ENCODE measurements at regions of chr3 and their contacts with region 1.

Region 1: DNA sequence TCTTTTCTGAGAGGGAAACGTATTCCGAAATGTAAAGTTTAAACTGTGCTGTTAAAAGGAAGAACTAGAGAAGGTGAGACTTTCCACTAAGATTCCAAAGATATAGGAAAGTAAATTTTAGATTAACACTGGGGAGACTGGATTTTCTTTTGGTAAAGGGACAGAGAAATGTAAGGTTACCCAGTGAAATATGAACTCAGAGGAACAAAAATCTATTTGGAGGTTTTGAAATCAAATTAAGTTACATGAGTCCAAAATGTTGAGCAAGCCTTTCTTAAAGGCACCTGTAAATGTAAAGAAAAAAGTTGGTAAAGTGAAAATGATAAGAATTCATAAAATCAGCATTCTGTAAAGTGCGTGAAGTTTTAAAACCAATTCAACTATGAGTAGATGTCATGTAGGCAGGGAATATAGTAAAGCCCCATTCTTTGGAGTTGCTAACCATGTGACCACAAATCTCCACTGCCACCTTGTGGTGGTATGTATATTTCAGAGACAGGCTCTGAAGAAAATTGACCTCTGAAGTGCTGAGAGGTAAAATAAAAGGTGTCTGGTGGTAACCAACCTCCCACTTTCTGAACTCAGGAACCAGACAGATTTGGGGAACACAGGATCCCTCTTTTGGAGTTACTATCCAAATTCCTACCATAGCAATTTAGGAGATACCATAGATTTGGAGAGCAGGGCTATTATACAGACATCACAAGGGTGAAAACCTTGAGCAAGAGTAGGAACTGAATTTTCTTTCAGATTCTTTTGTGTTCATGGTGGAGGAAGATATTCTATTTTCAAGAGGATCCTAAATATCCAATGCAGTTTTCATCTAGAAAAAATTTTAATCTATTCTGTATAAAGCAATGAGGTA is 215.3 kb downstream of the ROBO2 start:
- DNase-seq: no peak
- H3K4me3 ChIP-seq: no peak overlapping the region
- H3K27ac ChIP-seq: no peak overlapping the region
- H3K4me1 ChIP-seq: no peaks in the 10 kb centered on the region
- H3K27me3 ChIP-seq: no peaks in the 10 kb centered on the region
- CTCF ChIP-seq: peak; percentile 24 to 72 (median 59)

Region 2: GRCh38 chr3:76776927-76777326 is 478.3 kb before region 1 on chr3:
- intact Hi-C with region 1: no loop called
- DNase-seq: no peak
- H3K4me3 ChIP-seq: no peak overlapping the region
- H3K27ac ChIP-seq: no peak overlapping the region
- H3K4me1 ChIP-seq: no peaks in the 10 kb centered on the region
- H3K27me3 ChIP-seq: no peaks in the 10 kb centered on the region
- CTCF ChIP-seq: no peak

Region 3: DNA sequence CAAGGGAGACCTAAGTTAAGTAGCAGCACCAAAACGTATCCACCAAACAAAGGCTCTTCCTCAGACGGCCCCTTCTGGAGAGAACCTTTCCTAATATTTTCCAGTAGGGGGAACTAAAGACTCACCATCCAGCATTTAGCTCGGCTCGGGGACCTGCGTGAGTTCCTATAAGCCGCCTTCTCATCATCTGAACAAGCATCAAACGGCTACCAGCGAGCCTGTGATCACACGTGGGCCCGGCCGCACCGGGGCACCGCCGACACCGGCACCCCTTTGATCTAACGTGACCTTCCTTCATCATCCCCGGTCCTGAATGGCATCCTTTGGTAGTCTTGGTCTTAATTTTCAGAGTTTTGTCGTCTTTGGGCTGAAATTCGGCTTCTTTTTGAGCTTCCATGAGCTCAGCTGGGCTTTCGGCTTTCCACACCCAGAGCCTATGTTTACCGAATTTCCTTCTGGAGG is 216.7 kb before region 1 on chr3:
- intact Hi-C with region 1: loop called (anchors 1 kb)
- DNase-seq: peak in 1 of 2 donors; percentile 82
- H3K4me3 ChIP-seq: peak overlapping the region; percentile 63 to 82
- H3K27ac ChIP-seq: peak overlapping the region; percentile 63 to 73
- H3K4me1 ChIP-seq: no peaks in the 10 kb centered on the region
- H3K27me3 ChIP-seq: no peaks in the 10 kb centered on the region
- CTCF ChIP-seq: peak; percentile 38 to 71 (median 57)

Region 4: GRCh38 chr3:77370413-77370812 is 115.2 kb after region 1 on chr3:
- intact Hi-C with region 1: no loop called
- DNase-seq: peak in 1 of 2 donors; percentile 72
- H3K4me3 ChIP-seq: no peak overlapping the region
- H3K27ac ChIP-seq: peak overlapping the region in 1 of 2 donors; percentile 18
- H3K4me1 ChIP-seq: peaks cover 0 to 2% of the 10 kb centered on the region in 2 donors
- H3K27me3 ChIP-seq: no peaks in the 10 kb centered on the region
- CTCF ChIP-seq: no peak

Region 5: DNA sequence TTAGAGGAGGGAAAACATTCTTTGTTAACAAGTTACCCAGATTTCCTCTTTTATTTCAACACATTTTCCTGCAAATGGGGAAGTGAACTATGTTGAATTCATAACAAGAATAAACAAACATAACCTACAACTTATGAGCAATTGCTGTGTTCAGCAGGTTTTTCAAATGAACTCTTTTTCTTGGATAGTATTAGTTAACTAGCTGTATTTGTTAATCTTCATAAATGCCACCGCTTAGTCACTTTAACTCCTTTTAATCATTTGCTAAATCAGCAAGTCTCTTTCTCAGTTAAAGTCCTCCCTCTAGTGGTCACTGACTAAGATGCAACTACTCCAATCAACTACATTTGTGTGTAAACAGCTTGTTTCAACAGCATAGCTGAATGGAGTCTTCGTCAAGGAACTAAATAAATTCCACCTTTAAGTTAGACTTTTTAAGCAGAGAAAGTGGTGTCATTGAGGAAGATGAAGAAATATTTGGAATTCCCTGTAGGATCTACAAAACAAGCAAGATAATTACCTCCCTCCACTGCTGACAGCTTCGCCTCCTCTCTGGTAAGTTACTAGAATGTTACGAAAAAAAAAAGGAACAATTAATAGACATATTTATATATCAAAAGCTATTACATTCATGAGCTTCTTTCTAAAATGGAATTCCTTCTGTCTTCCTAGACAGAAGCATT is 1390.6 kb after region 1 on chr3:
- intact Hi-C with region 1: loop called (anchors 10 kb)
- DNase-seq: no peak
- H3K4me3 ChIP-seq: no peak overlapping the region
- H3K27ac ChIP-seq: no peak overlapping the region
- H3K4me1 ChIP-seq: peaks cover 0 to 5% of the 10 kb centered on the region in 2 donors
- H3K27me3 ChIP-seq: no peaks in the 10 kb centered on the region
- CTCF ChIP-seq: peak; percentile 47 to 81 (median 71)

Measured in ascending aorta (tissue), 2 donors.